MCF 10A (cell line): ENCODE measurements at regions of chr18 and their contacts with region 1.

Region 1: GRCh38 chr18:23662309-23663263 is at the start of gene ANKRD29:
- DNase-seq: peak; percentile 35
- H3K4me3 Mint-ChIP-seq: peak within 1 kb of the TSS; percentile 73
- H3K27ac Mint-ChIP-seq: peak within 1 kb of the TSS; percentile 7
- H3K4me1 Mint-ChIP-seq: peaks cover 12% of the 10 kb centered on the region
- H3K27me3 Mint-ChIP-seq: no peaks in the 10 kb centered on the region
- CTCF ChIP-seq: no peak
- total RNA-seq, gene ANKRD29: 2.4 and 3.8 TPM in 2 replicates

Region 2: GRCh38 chr18:23627320-23627719 is 35.3 kb before region 1 on chr18:
- CTCF ChIA-PET with region 1: interaction called, 3 read pairs
- POLR2A ChIA-PET with region 1: interaction called, 3 read pairs
- intact Hi-C with region 1: loop called (anchors 2 kb)
- DNase-seq: peak; percentile 86
- H3K4me3 Mint-ChIP-seq: no peak overlapping the region
- H3K27ac Mint-ChIP-seq: no peak overlapping the region
- H3K4me1 Mint-ChIP-seq: peaks cover 23% of the 10 kb centered on the region
- H3K27me3 Mint-ChIP-seq: no peaks in the 10 kb centered on the region
- CTCF ChIP-seq: no peak

Region 3: GRCh38 chr18:23650968-23651927 is 11.3 kb before region 1 on chr18:
- CTCF ChIA-PET with region 1: interaction called, 5 read pairs
- POLR2A ChIA-PET with region 1: interaction called, 15 read pairs
- intact Hi-C with region 1: no loop called
- DNase-seq: peak; percentile 74
- H3K4me3 Mint-ChIP-seq: no peak overlapping the region
- H3K27ac Mint-ChIP-seq: no peak overlapping the region
- H3K4me1 Mint-ChIP-seq: peaks cover 8% of the 10 kb centered on the region
- H3K27me3 Mint-ChIP-seq: no peaks in the 10 kb centered on the region
- CTCF ChIP-seq: no peak